HepG2 (cell line): ENCODE measurements at regions of chr4 and their contacts with region 1.

Region 1: GRCh38 chr4:78930016-78930629 is 9.1 kb downstream of the PAQR3 start:
- DNase-seq: no peak
- ATAC-seq: no peak
- H3K4me3 ChIP-seq: no peak overlapping the region
- H3K27ac ChIP-seq: no peak overlapping the region
- H3K4me1 ChIP-seq: peaks cover 7% of the 10 kb centered on the region
- H3K27me3 ChIP-seq: no peaks in the 10 kb centered on the region
- CTCF ChIP-seq: no peak
- EP300 ChIP-seq: no peak
- POLR2A ChIP-seq: no peak
- RAD21 ChIP-seq: no peak

Region 2: GRCh38 chr4:78902298-78902697 is 27.8 kb before region 1 on chr4:
- CTCF ChIA-PET with region 1: no interaction called
- POLR2A ChIA-PET with region 1: no interaction called
- in situ Hi-C with region 1: no loop called
- intact Hi-C with region 1: loop called (anchors 1 kb)
- DNase-seq: peak; percentile 6
- ATAC-seq: no peak
- H3K4me3 ChIP-seq: no peak overlapping the region
- H3K27ac ChIP-seq: no peak overlapping the region
- H3K4me1 ChIP-seq: no peaks in the 10 kb centered on the region
- H3K27me3 ChIP-seq: no peaks in the 10 kb centered on the region
- CTCF ChIP-seq: no peak
- EP300 ChIP-seq: no peak
- POLR2A ChIP-seq: no peak
- RAD21 ChIP-seq: no peak

Region 3: DNA sequence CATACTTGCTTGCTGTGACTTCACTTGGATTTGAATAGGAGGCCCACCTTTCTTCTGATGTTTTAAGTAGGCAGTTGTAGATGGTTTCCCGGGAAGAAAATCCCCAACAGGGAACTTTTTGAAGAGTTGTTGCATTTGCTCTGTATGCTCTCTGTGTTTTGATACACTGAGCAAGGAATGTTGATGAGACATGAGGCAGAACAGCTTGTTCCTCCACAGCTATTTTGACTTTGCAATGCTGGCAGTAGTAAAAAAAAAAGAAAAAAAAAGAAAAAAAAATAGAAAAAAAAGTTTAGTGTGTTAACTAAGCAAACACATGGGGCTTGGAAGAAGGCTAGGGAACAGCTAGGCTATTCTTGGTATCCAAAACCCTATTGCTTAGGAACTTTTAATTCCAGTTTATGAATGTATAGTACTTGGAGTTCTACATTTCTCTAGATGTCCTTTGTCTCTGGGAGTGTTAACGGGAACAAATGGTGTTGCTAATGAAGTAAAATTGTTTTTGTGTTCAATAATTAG is 32.5 kb after region 1 on chr4:
- CTCF ChIA-PET with region 1: no interaction called
- POLR2A ChIA-PET with region 1: no interaction called
- in situ Hi-C with region 1: no loop called
- intact Hi-C with region 1: no loop called
- DNase-seq: no peak
- ATAC-seq: no peak
- H3K4me3 ChIP-seq: no peak overlapping the region
- H3K27ac ChIP-seq: no peak overlapping the region
- H3K4me1 ChIP-seq: no peaks in the 10 kb centered on the region
- H3K27me3 ChIP-seq: no peaks in the 10 kb centered on the region; a peak in 1 of 5 replicates
- CTCF ChIP-seq: no peak
- EP300 ChIP-seq: no peak
- POLR2A ChIP-seq: no peak
- RAD21 ChIP-seq: no peak

Region 4: DNA sequence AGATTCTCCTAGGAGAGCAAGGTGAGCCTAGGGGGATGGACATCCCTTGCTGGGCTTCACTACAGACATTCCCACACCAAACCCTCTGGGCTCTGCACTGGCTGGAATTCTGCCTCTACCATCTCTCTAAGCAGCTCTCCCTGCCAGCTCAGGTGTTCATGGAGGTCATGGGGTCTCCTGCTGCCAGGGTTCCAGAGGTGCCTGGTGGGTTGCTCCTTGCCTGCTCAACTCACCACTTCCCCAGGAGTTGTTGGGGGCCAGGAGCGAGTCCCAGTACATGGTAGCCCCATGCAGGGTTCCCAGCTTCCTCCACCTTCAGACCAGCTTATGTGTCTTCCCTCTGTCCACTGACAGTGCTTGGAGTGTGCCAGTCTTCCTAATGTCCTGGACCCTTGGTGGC is 176.9 kb after region 1 on chr4:
- CTCF ChIA-PET with region 1: no interaction called
- POLR2A ChIA-PET with region 1: no interaction called
- in situ Hi-C with region 1: no loop called
- intact Hi-C with region 1: no loop called
- DNase-seq: no peak
- ATAC-seq: no peak
- H3K4me3 ChIP-seq: no peak overlapping the region
- H3K27ac ChIP-seq: no peak overlapping the region
- H3K4me1 ChIP-seq: no peaks in the 10 kb centered on the region
- H3K27me3 ChIP-seq: no peaks in the 10 kb centered on the region
- CTCF ChIP-seq: no peak
- EP300 ChIP-seq: no peak
- POLR2A ChIP-seq: no peak
- RAD21 ChIP-seq: no peak